OCI-LY7 (cell line): ENCODE measurements at regions of chr16 and their contacts with region 1.

Region 1: DNA sequence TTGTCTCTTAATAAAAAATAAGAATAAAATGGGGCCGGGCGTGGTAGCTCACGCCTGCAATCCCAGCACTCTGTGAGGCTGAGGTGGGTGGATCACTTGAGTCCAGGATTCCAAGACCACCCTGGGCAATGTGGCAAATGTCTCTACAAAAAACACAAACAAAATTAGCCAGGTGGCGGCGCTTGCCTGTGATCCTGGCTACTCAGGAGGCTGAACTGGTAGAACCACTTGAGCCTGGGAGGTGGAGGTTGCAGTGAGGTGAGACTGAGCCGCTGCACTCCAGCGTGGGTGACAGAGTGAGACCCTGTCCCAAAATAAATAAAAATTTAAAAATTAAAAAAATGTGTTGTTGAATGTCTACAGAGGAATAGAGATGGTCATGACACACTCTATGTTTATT is 2.9 kb upstream of the DEF8 start:
- DNase-seq: peak; percentile 49
- H3K4me3 ChIP-seq: no peak overlapping the region
- H3K27ac ChIP-seq: peak overlapping the region; percentile 94
- H3K4me1 ChIP-seq: peaks cover 79% of the 10 kb centered on the region
- CTCF ChIP-seq: peak; percentile 72

Region 2: GRCh38 chr16:89815639-89816348 is 129.9 kb before region 1 on chr16:
- CTCF ChIA-PET with region 1: no interaction called
- POLR2A ChIA-PET with region 1: no interaction called
- intact Hi-C with region 1: loop called (anchors 1 kb)
- DNase-seq: peak; percentile 54
- H3K4me3 ChIP-seq: peak overlapping the region; percentile 100
- H3K27ac ChIP-seq: peak overlapping the region; percentile 92
- H3K4me1 ChIP-seq: peaks cover 65% of the 10 kb centered on the region
- CTCF ChIP-seq: no peak

Region 3: DNA sequence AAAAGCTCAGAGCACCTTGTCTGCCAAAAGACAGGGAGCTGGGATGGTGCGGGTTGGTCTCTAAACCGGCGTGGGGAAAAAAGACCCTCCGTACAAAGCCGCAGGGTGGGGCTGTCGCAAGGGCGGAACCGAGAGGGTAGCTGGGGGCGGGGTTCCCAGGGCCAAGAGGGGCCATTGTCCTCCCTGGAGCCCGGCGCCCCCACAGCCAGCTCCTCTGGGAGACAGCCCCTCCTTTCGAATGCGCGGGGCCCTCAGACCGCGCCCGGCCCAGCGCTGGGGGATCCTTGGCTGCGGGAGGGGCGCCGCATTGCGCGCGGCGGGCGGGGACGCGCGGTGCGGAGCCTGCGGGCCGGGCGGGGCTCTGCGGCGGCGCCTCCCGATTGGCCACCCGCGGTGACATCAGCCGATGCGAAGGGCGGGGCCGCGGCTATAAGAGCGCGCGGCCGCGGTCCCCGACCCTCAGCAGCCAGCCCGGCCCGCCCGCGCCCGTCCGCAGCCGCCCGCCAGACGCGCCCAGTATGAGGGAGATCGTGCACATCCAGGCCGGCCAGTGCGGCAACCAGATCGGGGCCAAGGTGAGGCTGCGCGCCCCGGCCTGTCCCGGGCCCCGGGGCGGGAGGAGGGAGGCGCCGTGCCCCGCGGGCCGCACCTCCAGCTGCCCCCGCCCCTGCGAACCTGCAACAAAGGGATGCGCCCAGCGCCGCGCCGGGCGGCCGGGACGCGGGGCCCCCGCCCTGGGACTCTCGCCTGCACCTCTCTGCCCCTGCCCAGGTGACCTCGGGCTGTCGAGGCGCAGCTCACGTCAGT is 22.6 kb before region 1 on chr16 and contains the start of gene TUBB3:
- CTCF ChIA-PET with region 1: interaction called, 9 read pairs
- POLR2A ChIA-PET with region 1: interaction called, 13 read pairs
- intact Hi-C with region 1: loop called (anchors 1 kb)
- DNase-seq: peak; percentile 90
- H3K4me3 ChIP-seq: peak within 1 kb of the TSS; percentile 94
- H3K27ac ChIP-seq: peak within 1 kb of the TSS; percentile 69
- H3K4me1 ChIP-seq: peaks cover 51% of the 10 kb centered on the region
- CTCF ChIP-seq: peak; percentile 47; the same call in 1 of the 2 replicates
- total RNA-seq, gene TUBB3: 59.6 and 63.7 TPM in 2 replicates

Region 4: GRCh38 chr16:89956505-89957215 is 11.0 kb after region 1 on chr16:
- CTCF ChIA-PET with region 1: interaction called, 7 read pairs
- POLR2A ChIA-PET with region 1: interaction called, 8 read pairs
- intact Hi-C with region 1: loop called (anchors 1 kb)
- DNase-seq: peak; percentile 88
- H3K4me3 ChIP-seq: peak overlapping the region; percentile 35
- H3K27ac ChIP-seq: peak overlapping the region; percentile 97
- H3K4me1 ChIP-seq: peaks cover 71% of the 10 kb centered on the region
- CTCF ChIP-seq: no peak

Region 5: GRCh38 chr16:89972244-89973234 is 26.9 kb after region 1 on chr16:
- CTCF ChIA-PET with region 1: no interaction called
- POLR2A ChIA-PET with region 1: interaction called, 4 read pairs
- intact Hi-C with region 1: loop called (anchors 2 kb)
- DNase-seq: peak; percentile 95
- H3K4me3 ChIP-seq: peak overlapping the region; percentile 84
- H3K27ac ChIP-seq: peak overlapping the region; percentile 50
- H3K4me1 ChIP-seq: peaks cover 38% of the 10 kb centered on the region
- CTCF ChIP-seq: no peak; the same call in 1 of the 2 replicates

Region 6: DNA sequence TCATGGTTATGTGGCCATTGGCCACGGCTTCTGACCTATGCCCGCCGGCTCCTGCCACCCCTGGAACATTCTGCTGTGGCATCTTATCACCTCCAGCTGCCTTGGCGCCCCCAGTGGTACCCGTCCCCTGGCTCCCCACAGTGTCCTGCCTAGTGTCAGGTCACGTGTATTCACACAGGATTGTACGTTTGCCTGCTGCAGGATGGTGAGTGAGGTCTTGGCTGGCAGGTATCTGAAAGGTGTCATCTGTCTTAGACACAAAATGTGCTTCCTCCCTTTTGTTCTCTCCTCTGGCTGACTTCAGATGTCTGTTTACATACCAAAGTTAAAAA is 48.7 kb after region 1 on chr16:
- CTCF ChIA-PET with region 1: no interaction called
- POLR2A ChIA-PET with region 1: no interaction called
- intact Hi-C with region 1: no loop called
- DNase-seq: no peak
- H3K4me3 ChIP-seq: no peak overlapping the region
- H3K27ac ChIP-seq: peak overlapping the region; percentile 51
- H3K4me1 ChIP-seq: no peaks in the 10 kb centered on the region
- CTCF ChIP-seq: no peak

Region 7: DNA sequence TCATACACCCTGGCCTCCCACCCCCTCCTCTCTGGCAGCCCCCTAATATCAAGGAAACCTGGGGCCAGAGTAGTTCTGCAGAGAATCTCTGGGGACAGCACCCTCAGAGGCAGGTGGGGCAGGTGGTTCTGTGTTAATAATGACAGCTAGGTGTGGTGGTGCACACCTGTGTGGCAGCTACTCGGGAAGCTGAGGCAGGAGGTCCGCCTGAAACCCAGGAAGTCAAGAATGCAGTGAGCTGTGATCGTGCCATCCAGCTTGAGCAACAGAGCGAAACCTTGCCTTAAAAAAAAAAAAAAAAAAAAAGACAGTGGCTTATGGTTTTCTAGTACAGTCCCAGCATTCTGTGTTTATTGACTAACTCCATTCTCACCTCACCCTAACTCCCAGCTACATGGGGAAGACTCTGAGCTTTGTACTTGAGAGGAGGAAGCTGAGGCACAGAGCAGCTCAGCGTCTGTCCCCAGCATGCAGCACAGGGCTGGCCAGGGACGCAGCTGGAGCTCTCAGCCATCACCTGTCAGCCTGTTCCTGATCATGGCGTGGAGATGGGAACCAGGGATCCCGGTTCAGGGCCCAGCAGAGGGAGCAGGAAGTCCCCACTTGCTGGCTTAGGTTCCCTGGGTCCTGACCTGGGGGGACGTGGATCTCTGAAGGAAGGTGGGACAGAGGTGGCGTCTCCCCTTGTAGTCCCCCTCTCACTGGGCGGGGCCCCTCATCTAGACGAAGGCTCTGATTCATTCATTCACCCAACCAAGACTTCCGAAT is 67.5 kb after region 1 on chr16:
- CTCF ChIA-PET with region 1: no interaction called
- POLR2A ChIA-PET with region 1: interaction called, 7 read pairs
- intact Hi-C with region 1: loop called (anchors 2 kb)
- DNase-seq: peak; percentile 77
- H3K4me3 ChIP-seq: no peak overlapping the region
- H3K27ac ChIP-seq: no peak overlapping the region
- H3K4me1 ChIP-seq: peaks cover 33% of the 10 kb centered on the region
- CTCF ChIP-seq: no peak